Heart left ventricle (tissue), 16 donors: ENCODE measurements at regions of chr1 and their contacts with region 1.

Region 1: DNA sequence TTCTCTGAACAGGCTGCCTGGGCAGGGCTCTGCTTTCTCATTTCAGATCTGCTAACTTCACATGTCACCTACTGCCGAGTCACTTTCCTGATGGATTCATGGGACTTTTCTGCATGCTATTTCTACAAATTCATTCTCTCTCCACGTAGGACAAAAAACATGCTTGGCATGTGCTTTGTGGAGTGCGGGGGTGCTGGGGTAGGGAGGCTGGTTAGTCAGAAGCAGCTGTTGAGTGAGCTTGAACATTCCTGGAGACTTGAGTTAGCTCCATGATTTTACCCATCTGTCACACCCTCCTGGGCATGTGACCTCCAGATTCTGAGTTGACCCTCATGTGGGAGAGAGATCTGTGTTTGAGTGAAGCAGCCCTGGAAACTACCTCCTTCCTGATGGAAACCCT is 71.4 kb downstream of the UCK2 start:
- DNase-seq: peak in 2 of 5 donors; percentile 41 to 47
- ATAC-seq: peak; percentile 33 to 73 (median 50)
- H3K4me3 ChIP-seq: no peak overlapping the region
- H3K27ac ChIP-seq: peak overlapping the region in 10 of 12 donors; percentile 1 to 77 (median 59)
- H3K4me1 ChIP-seq: peaks cover 0 to 71% (median 57%) of the 10 kb centered on the region in 12 donors
- H3K27me3 ChIP-seq: no peaks in the 10 kb centered on the region
- CTCF ChIP-seq: no peak
- POLR2A ChIP-seq: no peak

Region 2: DNA sequence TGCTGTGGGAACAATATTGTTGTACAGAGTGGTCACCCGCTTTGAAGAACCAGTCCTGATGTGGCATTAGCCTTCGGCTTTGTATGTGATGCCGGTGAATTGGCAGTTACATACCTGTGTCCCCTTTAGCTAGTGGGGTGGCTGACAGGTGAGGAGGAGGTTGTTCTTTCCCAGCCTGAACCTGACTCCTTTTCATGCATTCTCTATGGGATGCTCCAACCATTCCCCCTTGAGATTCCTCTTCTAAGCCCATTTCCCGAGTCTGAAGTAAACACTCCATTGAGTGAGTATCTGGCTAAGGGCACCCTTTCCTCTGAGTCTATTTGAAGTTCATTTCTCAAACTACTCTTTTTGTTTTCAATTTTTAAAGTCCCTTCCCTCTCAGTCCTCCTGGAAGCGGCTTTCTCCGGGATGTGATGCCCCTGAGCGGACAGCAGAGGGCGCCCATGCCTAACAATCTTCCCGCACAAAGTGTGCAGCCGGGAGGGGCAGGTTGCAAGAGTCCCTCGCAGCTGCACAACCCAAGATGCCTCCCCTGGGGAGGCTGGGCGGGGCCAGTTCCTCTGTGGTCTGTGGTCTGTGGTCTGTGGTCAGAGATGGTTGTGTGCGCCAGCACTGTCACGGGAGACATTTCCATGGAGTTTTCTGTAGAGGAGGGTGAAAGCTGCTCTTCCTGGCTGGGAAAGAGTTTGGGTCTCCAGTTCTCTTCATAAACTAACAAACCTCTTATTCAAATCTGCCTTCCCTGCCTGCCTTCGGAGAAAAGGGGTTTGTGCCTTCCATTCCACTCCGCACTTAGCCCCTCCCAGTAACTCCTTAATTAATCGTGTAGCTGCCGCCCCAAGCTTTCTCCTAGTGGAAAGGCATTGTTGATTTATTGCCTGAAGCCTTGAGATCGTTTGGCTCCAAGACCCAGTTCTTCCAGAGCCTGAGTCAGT is 505.9 kb before region 1 on chr1:
- intact Hi-C with region 1: loop called in 1 of 10 experiments (anchors 10 kb)
- DNase-seq: peak; percentile 84 to 91 (median 88)
- ATAC-seq: peak; percentile 91 to 94 (median 93)
- H3K4me3 ChIP-seq: peak overlapping the region in 7 of 12 donors; percentile 6 to 33 (median 11)
- H3K27ac ChIP-seq: peak overlapping the region in 3 of 12 donors; percentile 6 to 15 (median 10)
- H3K4me1 ChIP-seq: peaks cover 0 to 18% (median 6%) of the 10 kb centered on the region in 12 donors
- H3K27me3 ChIP-seq: peaks cover 0 to 59% (median 0%) of the 10 kb centered on the region in 9 donors
- CTCF ChIP-seq: peak; percentile 87 to 98 (median 96)
- POLR2A ChIP-seq: no peak

Region 3: DNA sequence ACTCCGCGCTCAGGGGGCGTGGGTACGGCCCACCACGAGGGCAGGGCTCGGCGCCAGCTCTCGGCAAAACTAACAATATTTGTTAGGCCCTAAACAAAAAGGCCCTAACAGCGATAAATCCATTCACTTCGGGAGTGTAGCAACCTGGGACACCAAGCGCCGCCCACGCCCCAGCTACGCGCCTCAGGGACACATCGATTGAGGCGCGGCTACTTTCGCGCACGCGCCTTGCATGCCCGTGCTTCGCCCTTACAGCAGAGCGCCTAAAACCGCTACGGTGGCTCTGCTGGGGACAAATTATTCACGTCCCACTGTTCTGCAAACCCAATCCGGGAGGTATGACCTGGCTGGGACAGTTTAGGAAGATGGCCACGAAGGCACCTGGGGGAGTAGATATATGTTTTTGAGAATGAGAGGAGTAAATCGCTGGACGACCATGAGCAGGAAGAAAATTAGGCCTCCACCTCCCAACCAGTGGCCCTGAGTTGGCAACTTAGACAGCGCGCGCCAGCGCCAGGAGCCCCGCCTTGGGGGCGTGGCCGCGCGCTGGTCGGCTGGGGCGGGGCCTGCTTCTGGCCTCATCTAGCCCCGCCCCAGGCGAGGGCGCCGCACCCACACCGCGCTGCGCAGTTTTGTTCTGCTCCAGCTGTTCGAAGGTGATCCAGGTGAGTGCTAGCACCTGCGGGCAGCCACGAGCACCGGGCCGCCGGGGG is 268.1 kb before region 1 on chr1 and contains the start of gene MGST3:
- intact Hi-C with region 1: loop called in 1 of 10 experiments (anchors 10 kb)
- DNase-seq: peak; percentile 95 to 97 (median 96)
- ATAC-seq: peak; percentile 95 to 98 (median 97)
- H3K4me3 ChIP-seq: peak within 1 kb of the TSS; percentile 63 to 96 (median 89)
- H3K27ac ChIP-seq: peak within 1 kb of the TSS; percentile 69 to 99 (median 93)
- H3K4me1 ChIP-seq: peaks cover 4 to 49% (median 35%) of the 10 kb centered on the region in 12 donors
- H3K27me3 ChIP-seq: no peaks in the 10 kb centered on the region
- CTCF ChIP-seq: no peak
- POLR2A ChIP-seq: peak; percentile 92 to 94
- total RNA-seq, gene MGST3: 408 to 1,027 (median 747) TPM

Region 4: GRCh38 chr1:165659581-165659895 is 239.3 kb before region 1 on chr1:
- intact Hi-C with region 1: no loop called
- DNase-seq: no peak
- ATAC-seq: no peak
- H3K4me3 ChIP-seq: no peak overlapping the region
- H3K27ac ChIP-seq: no peak overlapping the region
- H3K4me1 ChIP-seq: peaks cover 0 to 9% (median 0%) of the 10 kb centered on the region in 12 donors
- H3K27me3 ChIP-seq: no peaks in the 10 kb centered on the region
- CTCF ChIP-seq: no peak
- POLR2A ChIP-seq: no peak

Region 5: GRCh38 chr1:165726169-165726568 is 172.7 kb before region 1 on chr1:
- intact Hi-C with region 1: loop called in 1 of 10 experiments (anchors 10 kb)
- DNase-seq: no peak
- ATAC-seq: no peak
- H3K4me3 ChIP-seq: no peak overlapping the region
- H3K27ac ChIP-seq: no peak overlapping the region
- H3K4me1 ChIP-seq: no peaks in the 10 kb centered on the region
- H3K27me3 ChIP-seq: no peaks in the 10 kb centered on the region
- CTCF ChIP-seq: no peak
- POLR2A ChIP-seq: no peak

Region 6: DNA sequence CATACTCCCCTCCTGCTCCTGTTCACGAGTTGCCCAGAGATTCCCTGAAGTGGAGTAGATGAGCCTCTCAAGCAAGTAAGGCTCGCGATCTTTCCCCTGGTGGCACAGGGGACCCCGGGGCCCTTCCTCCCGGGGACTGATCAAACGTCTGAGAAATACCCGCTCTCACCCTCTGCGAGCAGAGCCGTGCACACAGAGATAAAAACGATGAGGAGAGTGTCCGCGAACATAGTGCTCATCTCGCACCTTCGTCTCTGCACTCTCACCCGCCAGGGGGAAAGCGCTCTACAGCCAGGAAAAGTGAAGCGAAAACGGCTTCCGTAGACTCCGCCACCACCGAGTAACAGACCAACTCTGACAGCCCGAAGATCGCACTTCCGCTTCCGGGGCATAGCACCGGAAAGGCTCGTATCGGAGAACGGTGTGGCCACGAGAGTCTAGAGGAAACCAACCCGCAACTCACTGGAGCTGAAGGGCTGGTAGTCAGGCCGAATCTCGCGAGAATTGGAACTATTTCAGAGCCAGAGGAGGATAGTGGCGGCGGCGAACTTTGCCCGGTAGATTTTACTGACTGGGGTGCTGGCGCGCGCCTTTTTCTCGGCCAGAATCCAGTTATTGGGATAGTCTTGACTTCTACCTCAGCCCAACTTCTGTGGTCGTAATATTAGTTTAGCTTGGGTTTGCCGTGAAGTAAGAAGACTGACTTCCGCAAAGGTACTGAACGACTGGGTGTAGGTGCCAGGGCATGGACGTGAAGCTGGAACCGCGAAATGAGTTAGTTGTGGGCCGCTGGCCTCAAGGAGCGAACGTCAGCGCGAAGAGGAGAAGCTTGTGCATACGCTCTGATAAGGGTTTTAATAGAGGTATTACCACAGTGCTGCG is 130.1 kb before region 1 on chr1 and contains the start of gene TMCO1:
- intact Hi-C with region 1: loop called in 3 of 10 experiments (anchors 2 to 10 kb)
- DNase-seq: peak; percentile 94 to 97 (median 96)
- ATAC-seq: peak; percentile 100
- H3K4me3 ChIP-seq: peak within 1 kb of the TSS; percentile 52 to 88 (median 76)
- H3K27ac ChIP-seq: peak within 1 kb of the TSS; percentile 64 to 94 (median 87)
- H3K4me1 ChIP-seq: peaks cover 5 to 46% (median 31%) of the 10 kb centered on the region in 12 donors
- H3K27me3 ChIP-seq: no peaks in the 10 kb centered on the region
- CTCF ChIP-seq: peak in 4 of 12 donors; percentile 12 to 39 (median 30)
- POLR2A ChIP-seq: peak in 1 of 2 donors; percentile 68
- total RNA-seq, gene TMCO1: 33.2 to 66.6 (median 54.3) TPM

Region 7: GRCh38 chr1:165827268-165828102 is 71.4 kb before region 1 on chr1 and contains the start of gene UCK2:
- intact Hi-C with region 1: loop called in 6 of 10 experiments (anchors 5 to 10 kb)
- DNase-seq: peak; percentile 81 to 88 (median 85)
- ATAC-seq: peak; percentile 77 to 96 (median 94)
- H3K4me3 ChIP-seq: peak within 1 kb of the TSS; percentile 77 to 98 (median 86)
- H3K27ac ChIP-seq: peak within 1 kb of the TSS; percentile 67 to 93 (median 88)
- H3K4me1 ChIP-seq: peaks cover 0 to 24% (median 10%) of the 10 kb centered on the region in 12 donors
- H3K27me3 ChIP-seq: no peaks in the 10 kb centered on the region
- CTCF ChIP-seq: peak in 4 of 12 donors; percentile 1 to 40 (median 8)
- POLR2A ChIP-seq: peak in 1 of 2 donors; percentile 34
- total RNA-seq, gene UCK2: 7.6 to 26.6 (median 13.9) TPM